GM18951 (cell line): ENCODE measurements at regions of chr2 and their contacts with region 1.

Region 1: GRCh38 chr2:54723131-54723995 is at the start of gene EML6:
- POLR2A ChIP-seq: peak; percentile 52

Region 2: DNA sequence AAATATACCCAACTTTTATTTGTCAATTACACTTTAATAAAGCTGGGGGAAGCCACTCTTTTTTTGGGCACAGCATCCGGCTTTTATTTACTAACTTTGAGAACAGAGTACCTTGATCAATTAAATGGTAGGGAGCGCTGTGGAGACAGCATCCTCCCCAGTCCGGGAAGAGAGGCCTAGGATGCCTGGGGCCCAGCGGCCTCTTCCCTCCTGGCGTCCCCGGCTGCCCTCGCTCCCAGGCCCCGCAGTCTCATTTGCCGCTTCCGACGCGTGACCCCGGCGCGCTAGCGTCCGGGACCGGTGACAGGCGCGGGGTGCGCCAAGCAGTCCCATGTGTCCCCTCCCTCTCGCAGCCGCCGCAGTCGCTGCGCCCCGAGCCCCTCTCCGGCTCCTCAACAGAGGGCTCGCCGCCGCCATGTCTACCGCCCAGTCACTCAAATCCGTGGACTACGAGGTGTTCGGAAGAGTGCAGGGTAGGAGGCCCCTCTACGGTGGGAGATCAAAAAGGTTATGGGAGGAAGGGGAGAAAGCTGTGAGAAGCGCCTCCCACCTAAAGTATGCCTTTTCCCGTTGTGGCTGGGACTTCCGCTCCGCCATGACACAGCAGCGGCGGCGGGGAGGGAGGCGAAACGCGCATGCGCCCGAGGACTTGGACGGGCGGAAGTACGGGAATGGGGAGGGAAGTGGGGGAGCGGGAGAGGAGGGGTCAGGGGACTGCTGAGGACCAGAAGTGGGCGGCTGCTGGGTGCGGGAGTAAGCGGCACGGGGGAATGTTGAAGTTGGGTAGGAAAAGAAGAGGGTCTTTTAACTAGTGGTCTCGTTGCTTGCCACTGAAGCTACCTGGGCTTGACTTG is 607.9 kb before region 1 on chr2 and contains the start of gene ACYP2:
- in situ Hi-C with region 1: loop called (anchors 25 kb)
- POLR2A ChIP-seq: peak; percentile 87

Region 3: GRCh38 chr2:54773838-54774237 is 50.5 kb after region 1 on chr2:
- in situ Hi-C with region 1: no loop called
- POLR2A ChIP-seq: no peak